Activated CD4-positive, alpha-beta T cell treated with anti-CD3 and anti-CD28 coated beads for 36 hours (primary cell): ENCODE measurements at regions of chr5 and their contacts with region 1.

Region 1: DNA sequence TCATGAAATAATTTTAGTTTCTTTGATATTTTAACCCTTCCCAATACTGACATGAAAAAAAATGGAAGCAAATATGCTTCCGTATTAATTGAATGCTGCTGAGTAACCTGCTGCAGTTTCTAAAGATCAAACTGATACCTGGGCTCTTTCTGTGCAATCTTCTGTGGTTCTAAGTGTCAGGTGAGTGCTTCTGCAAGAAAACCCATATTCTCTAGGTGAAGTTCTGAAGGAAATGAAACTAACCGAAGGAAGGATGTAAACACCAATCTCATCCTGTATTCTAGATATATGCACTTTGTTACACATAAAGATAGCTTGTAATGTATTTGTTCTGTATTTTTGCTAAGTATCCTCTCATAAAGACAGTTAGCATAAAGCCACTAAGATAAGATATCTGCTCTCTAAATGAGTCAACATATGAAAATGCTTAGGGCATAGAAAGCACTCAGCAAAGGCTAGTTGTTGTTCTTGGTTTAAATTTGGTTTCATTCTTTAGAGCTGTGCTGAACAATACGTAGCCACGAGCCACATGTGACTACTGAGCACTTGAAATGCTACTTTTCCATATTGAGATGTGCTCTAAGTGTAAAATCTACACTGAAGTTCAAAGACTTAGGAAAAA is 52.0 kb downstream of the ITGA2 start:
- DNase-seq: peak; percentile 43
- ATAC-seq: peak; percentile 93
- H3K4me3 Mint-ChIP-seq: no peak overlapping the region
- H3K27ac Mint-ChIP-seq: peak overlapping the region; percentile 48
- H3K4me1 Mint-ChIP-seq: peaks cover 37% of the 10 kb centered on the region
- H3K27me3 Mint-ChIP-seq: peaks cover 16% of the 10 kb centered on the region

Region 2: GRCh38 chr5:52771343-52772039 is 269.7 kb before region 1 on chr5:
- CTCF ChIA-PET with region 1: no interaction called
- POLR2A ChIA-PET with region 1: no interaction called
- intact Hi-C with region 1: no loop called
- DNase-seq: peak; percentile 63
- ATAC-seq: peak; percentile 91
- H3K4me3 Mint-ChIP-seq: no peak overlapping the region
- H3K27ac Mint-ChIP-seq: peak overlapping the region; percentile 25
- H3K4me1 Mint-ChIP-seq: peaks cover 34% of the 10 kb centered on the region
- H3K27me3 Mint-ChIP-seq: peaks cover 11% of the 10 kb centered on the region

Region 3: DNA sequence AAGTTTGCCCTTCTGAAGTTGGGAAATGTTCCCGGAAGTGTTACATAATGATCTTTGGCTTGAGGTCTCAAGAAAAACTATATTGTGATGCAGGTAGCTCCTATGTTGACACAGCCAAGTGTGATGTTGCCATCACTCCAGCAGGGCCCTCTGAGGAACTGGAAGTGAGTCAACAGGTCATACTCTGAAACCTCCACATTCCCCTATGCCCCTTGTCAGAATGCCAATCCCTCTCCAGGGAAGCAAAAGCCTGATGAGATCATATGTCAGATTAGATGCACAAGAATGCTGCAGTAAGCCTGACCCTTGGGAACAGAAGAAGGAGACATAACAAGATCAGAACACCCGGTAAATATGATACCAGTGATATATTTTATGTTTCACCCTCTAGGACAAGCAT is 118.8 kb before region 1 on chr5:
- CTCF ChIA-PET with region 1: no interaction called
- POLR2A ChIA-PET with region 1: no interaction called
- intact Hi-C with region 1: no loop called
- DNase-seq: no peak
- ATAC-seq: no peak
- H3K4me3 Mint-ChIP-seq: no peak overlapping the region
- H3K27ac Mint-ChIP-seq: no peak overlapping the region
- H3K4me1 Mint-ChIP-seq: no peaks in the 10 kb centered on the region
- H3K27me3 Mint-ChIP-seq: peaks cover 11% of the 10 kb centered on the region

Region 4: DNA sequence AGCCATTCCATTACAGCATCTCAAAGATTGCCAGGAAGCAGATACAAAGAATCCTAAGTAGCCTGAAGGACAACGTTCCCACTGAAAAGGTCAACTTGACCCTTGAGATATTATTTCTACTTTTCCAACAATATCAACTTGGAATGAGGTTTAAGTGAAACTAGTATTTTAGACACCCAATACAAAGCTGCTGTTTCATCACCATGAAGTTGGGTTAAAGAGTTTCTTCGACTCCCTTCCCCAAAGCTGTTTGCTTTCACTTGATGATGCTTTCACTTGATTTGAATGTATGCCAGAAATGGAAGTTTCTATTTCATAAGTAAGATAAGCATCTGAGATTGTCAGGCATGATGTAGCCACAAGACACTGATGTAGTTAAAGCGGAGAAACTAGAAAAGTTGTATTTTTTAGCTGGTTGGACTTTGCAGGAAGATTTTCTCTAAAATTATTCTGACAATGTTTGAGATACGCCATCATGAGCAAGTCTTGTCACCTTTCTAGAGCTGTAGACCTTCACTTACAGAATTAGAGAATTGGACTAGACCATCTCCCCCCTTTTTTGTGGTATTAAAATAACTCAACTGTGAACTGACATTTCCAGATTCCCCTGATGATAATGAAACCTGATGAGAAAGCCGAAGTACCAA is 48.3 kb after region 1 on chr5:
- CTCF ChIA-PET with region 1: interaction called, 32 read pairs
- POLR2A ChIA-PET with region 1: no interaction called
- intact Hi-C with region 1: loop called in 1 of 2 experiments (anchors 1 kb)
- DNase-seq: no peak
- ATAC-seq: peak; percentile 86
- H3K4me3 Mint-ChIP-seq: peak overlapping the region; percentile 60
- H3K27ac Mint-ChIP-seq: peak overlapping the region; percentile 83
- H3K4me1 Mint-ChIP-seq: peaks cover 30% of the 10 kb centered on the region
- H3K27me3 Mint-ChIP-seq: peaks cover 2% of the 10 kb centered on the region

Region 5: DNA sequence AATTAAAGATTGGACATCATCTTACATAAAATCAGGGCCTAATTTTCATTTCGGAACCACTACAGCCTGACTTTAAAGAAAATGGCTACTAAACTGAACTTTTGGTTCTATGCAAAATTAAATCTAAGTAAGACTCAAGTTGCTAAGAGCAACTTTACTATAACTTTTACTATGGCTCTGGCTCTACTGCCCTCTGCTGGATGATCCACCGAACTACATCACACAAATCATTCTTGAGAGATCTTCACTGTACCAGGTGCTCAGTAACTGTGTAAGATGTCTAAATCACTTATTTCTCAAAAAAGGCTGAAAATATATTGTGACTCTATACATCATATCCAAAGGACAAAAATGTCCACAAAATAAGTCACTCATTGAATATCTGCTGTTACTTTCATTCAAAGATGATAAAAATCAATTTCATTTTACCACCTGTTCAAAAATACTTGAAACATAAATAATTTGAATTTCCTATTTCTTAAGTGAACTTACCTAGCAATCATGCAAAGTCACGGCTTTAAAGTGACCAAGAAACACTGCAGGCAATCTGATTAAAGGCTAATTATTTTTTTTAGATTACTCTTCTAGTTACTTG is 54.8 kb after region 1 on chr5:
- CTCF ChIA-PET with region 1: no interaction called
- POLR2A ChIA-PET with region 1: no interaction called
- intact Hi-C with region 1: loop called (anchors 2 kb)
- DNase-seq: peak; percentile 83
- ATAC-seq: peak; percentile 66
- H3K4me3 Mint-ChIP-seq: no peak overlapping the region
- H3K27ac Mint-ChIP-seq: no peak overlapping the region
- H3K4me1 Mint-ChIP-seq: peaks cover 6% of the 10 kb centered on the region
- H3K27me3 Mint-ChIP-seq: no peaks in the 10 kb centered on the region